ENCODE measurements at regions of chr13 and their contacts with region 1.

Region 1: DNA sequence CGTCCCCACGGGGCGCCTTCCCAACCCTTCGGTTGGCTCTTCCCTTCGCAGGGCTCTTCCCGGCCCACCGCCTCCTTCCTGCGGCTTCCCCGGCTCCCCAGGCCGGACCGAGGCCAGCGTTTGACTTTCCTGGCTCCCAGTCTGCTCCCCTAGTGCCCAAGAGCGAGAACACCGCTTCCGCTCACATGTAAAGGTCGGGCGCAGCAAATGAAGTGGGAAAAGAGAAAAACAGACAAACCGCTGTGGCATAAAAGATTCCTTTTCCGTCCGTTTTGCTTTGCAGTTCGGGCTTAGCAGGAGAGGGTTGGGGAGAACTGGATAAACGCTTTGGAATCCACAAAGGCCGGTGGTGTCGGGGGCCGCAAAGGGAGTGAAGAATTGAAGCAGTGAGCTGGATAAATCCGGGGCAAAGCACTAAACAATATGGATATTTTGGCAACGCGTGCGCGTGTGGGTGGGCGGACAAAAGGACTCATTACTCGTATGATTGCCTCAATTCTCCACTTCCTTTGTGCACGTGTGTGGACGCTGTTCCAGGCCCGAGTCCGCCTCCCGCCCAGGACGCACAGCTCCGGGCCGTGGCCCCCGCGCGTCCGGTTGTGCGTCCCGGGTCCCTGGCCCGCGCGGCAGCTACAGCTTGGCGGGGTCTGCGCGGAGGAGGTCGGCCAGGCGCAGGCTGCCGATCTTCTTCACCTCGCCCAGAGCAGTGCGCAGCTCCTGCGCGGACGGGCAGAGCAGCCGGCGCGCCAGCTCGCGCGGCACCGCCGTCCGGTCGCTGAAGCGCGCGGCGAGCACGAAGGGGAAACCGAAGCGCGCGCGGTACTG is 8.6 kb upstream of the CDX2 start:
- DNase-seq: peak in 1 of 2 experiments; percentile 72
- H3K4me3 ChIP-seq: peak overlapping the region in 1 of 4 experiments; percentile 28; a peak in 1 of 8 replicates
- H3K27ac ChIP-seq: no peak overlapping the region
- H3K4me1 ChIP-seq: peaks cover 0 to 13% (median 5%) of the 10 kb centered on the region in 4 experiments; a peak in 5 of 7 replicates
- H3K27me3 ChIP-seq: peaks cover 97 to 100% (median 100%) of the 10 kb centered on the region in 4 experiments
- CTCF ChIP-seq: no peak
- EP300 ChIP-seq: peak in 1 of 2 experiments; percentile 50; a peak in 1 of 3 replicates
- POLR2A ChIP-seq: no peak
- RAD21 ChIP-seq: no peak

Region 2: GRCh38 chr13:27374650-27375049 is 603.0 kb before region 1 on chr13:
- CTCF ChIA-PET with region 1: interaction called, 22 read pairs
- POLR2A ChIA-PET with region 1: no interaction called
- DNase-seq: no peak
- H3K4me3 ChIP-seq: no peak overlapping the region
- H3K27ac ChIP-seq: no peak overlapping the region
- H3K4me1 ChIP-seq: peaks cover 0 to 5% (median 3%) of the 10 kb centered on the region in 4 experiments; a peak in 2 of 7 replicates
- H3K27me3 ChIP-seq: peaks cover 0 to 3% (median 1%) of the 10 kb centered on the region in 4 experiments; a peak in 2 of 7 replicates
- CTCF ChIP-seq: peak; percentile 46 to 85 (median 82)
- EP300 ChIP-seq: no peak
- POLR2A ChIP-seq: no peak
- RAD21 ChIP-seq: peak; percentile 87 to 88

Region 3: GRCh38 chr13:27919934-27920676 is 57.6 kb before region 1 on chr13 and contains the start of gene PDX1:
- CTCF ChIA-PET with region 1: interaction called, 12 read pairs
- POLR2A ChIA-PET with region 1: interaction called, 6 read pairs
- DNase-seq: peak in 1 of 2 experiments; percentile 81
- H3K4me3 ChIP-seq: peak within 1 kb of the TSS in 2 of 4 experiments; percentile 7 to 49; a peak in 4 of 8 replicates
- H3K27ac ChIP-seq: no peak within 1 kb of the TSS
- H3K4me1 ChIP-seq: peaks cover 8 to 34% (median 22%) of the 10 kb centered on the region in 4 experiments
- H3K27me3 ChIP-seq: peaks cover 97 to 100% (median 100%) of the 10 kb centered on the region in 4 experiments
- CTCF ChIP-seq: no peak
- EP300 ChIP-seq: no peak
- POLR2A ChIP-seq: no peak
- RAD21 ChIP-seq: no peak
- total RNA-seq, gene PDX1: not detected in 2 replicates

Region 4: DNA sequence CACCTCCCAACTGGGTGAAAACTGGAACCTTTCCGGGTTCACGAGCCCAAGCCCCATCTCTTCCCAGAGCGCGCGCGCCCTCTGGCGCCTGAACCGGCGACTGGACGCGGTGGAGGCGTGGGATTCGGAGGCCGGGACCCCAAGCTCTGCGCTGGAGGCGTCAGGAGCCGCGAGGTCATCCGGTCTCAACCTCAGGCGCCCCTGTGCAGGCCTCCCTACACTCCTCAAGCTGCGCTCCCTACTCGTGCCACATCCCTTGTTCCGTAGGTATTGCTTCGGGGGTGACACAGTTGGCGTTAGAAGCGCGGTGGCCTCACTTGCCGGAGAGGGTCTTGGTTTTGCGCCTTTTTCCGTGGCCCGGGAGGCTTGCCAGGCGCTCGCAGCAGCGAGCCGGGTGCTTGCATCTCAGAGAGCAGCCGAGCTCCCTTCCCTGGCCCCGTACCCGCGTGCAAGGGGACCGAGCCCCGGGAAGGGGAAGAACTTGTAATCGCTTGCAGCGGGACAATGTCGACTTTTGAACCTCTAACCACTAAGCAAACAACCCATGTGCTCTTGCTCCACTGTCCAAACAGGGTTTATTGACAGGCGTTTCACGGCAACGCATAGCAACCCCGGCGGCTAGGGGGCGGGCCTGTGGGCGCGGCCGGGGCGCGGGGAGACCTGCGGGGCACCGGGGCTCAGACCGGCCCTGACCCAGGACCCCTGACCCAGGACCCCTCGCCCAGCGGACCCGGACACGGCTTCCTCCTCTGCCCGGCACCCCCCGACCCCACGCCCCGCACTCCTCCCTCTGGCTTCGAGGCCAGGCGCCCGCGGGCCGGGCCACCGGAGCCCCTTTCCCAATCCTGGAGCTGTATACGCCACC is 17.1 kb before region 1 on chr13:
- CTCF ChIA-PET with region 1: interaction called, 283 read pairs
- POLR2A ChIA-PET with region 1: interaction called, 31 read pairs
- DNase-seq: peak in 1 of 2 experiments; percentile 95
- H3K4me3 ChIP-seq: peak overlapping the region in 3 of 4 experiments; percentile 11 to 49 (median 26); a peak in 4 of 8 replicates
- H3K27ac ChIP-seq: no peak overlapping the region
- H3K4me1 ChIP-seq: peaks cover 7 to 20% (median 12%) of the 10 kb centered on the region in 4 experiments; a peak in 6 of 7 replicates
- H3K27me3 ChIP-seq: peaks cover 90 to 100% (median 98%) of the 10 kb centered on the region in 4 experiments
- CTCF ChIP-seq: peak in 2 of 3 experiments; percentile 81 to 83; a peak in 3 of 4 replicates
- EP300 ChIP-seq: no peak
- POLR2A ChIP-seq: no peak
- RAD21 ChIP-seq: peak; percentile 74 to 85

Measured in H1 (cell line).